Gastrocnemius medialis (tissue), 4 donors: ENCODE measurements at regions of chr2 and their contacts with region 1.

Region 1: GRCh38 chr2:190319555-190320498 is at the start of gene HIBCH:
- DNase-seq: peak; percentile 95 to 98
- ATAC-seq: peak; percentile 98
- H3K4me3 ChIP-seq: peak within 1 kb of the TSS; percentile 62 to 81 (median 70)
- H3K27ac ChIP-seq: peak within 1 kb of the TSS; percentile 83 to 91 (median 89)
- H3K4me1 ChIP-seq: peaks cover 14 to 19% of the 10 kb centered on the region in 2 donors
- H3K27me3 ChIP-seq: no peaks in the 10 kb centered on the region
- CTCF ChIP-seq: peak; percentile 40 to 78 (median 49)
- POLR2A ChIP-seq: peak; percentile 59 to 76
- total RNA-seq, gene HIBCH: 3.7 to 20.1 (median 10.6) TPM

Region 2: GRCh38 chr2:190180313-190181122 is 139.3 kb before region 1 on chr2:
- in situ Hi-C with region 1: no loop called
- intact Hi-C with region 1: loop called (anchors 5 kb)
- DNase-seq: peak; percentile 31 to 80
- ATAC-seq: peak; percentile 70 to 81
- H3K4me3 ChIP-seq: peak overlapping the region; percentile 57 to 80 (median 78)
- H3K27ac ChIP-seq: peak overlapping the region; percentile 82 to 94 (median 85)
- H3K4me1 ChIP-seq: peaks cover 0 to 4% of the 10 kb centered on the region in 2 donors
- H3K27me3 ChIP-seq: no peaks in the 10 kb centered on the region
- CTCF ChIP-seq: peak in 3 of 5 experiments; percentile 59 to 74 (median 68)
- POLR2A ChIP-seq: peak; percentile 43 to 44

Region 3: GRCh38 chr2:190261851-190262250 is 58.0 kb before region 1 on chr2:
- in situ Hi-C with region 1: no loop called
- intact Hi-C with region 1: loop called (anchors 2 kb)
- DNase-seq: no peak
- ATAC-seq: peak; percentile 52 to 71
- H3K4me3 ChIP-seq: no peak overlapping the region
- H3K27ac ChIP-seq: peak overlapping the region in 3 of 4 donors; percentile 4 to 51 (median 36)
- H3K4me1 ChIP-seq: peaks cover 10 to 16% of the 10 kb centered on the region in 2 donors
- H3K27me3 ChIP-seq: no peaks in the 10 kb centered on the region
- CTCF ChIP-seq: no peak
- POLR2A ChIP-seq: no peak

Region 4: GRCh38 chr2:190343500-190344275 is 23.9 kb after region 1 on chr2 and contains the start of gene INPP1:
- in situ Hi-C with region 1: no loop called
- intact Hi-C with region 1: loop called (anchors 2 kb)
- DNase-seq: peak; percentile 33 to 54
- ATAC-seq: peak; percentile 66 to 72
- H3K4me3 ChIP-seq: peak within 1 kb of the TSS; percentile 58 to 82 (median 72)
- H3K27ac ChIP-seq: peak within 1 kb of the TSS; percentile 77 to 90 (median 89)
- H3K4me1 ChIP-seq: peaks cover 13 to 24% of the 10 kb centered on the region in 2 donors
- H3K27me3 ChIP-seq: no peaks in the 10 kb centered on the region
- CTCF ChIP-seq: no peak
- POLR2A ChIP-seq: peak; percentile 65 to 74
- total RNA-seq, gene INPP1: 5.6 to 9.9 (median 8.0) TPM

Region 5: DNA sequence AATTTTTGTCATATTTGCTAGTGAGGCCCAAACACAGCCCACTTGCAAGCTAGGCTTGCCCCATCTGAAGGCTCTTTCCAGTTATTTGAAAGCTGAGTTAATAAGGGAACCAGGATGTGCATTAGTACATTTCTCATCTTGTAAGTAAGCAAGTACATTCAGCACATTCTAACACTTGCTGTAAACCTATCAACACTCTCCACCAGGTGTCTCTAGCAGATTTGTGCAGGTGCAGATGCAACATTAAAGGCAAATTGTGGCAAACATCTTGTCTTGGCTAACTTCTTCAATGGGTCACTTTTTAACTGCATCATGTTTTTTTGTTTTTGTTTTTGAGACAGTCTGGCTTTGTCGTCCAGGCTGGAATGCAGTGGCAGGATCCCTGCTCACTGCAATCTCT is 63.0 kb after region 1 on chr2:
- in situ Hi-C with region 1: loop called in 1 of 4 experiments (anchors 10 kb)
- intact Hi-C with region 1: no loop called
- DNase-seq: no peak
- ATAC-seq: no peak
- H3K4me3 ChIP-seq: no peak overlapping the region
- H3K27ac ChIP-seq: no peak overlapping the region
- H3K4me1 ChIP-seq: no peaks in the 10 kb centered on the region
- H3K27me3 ChIP-seq: no peaks in the 10 kb centered on the region
- CTCF ChIP-seq: peak in 3 of 5 experiments; percentile 12 to 45 (median 36)
- POLR2A ChIP-seq: no peak

Region 6: GRCh38 chr2:190534310-190535120 is 214.7 kb after region 1 on chr2 and contains the start of gene NEMP2:
- in situ Hi-C with region 1: loop called in 1 of 4 experiments (anchors 10 kb)
- intact Hi-C with region 1: no loop called
- DNase-seq: peak; percentile 55 to 74
- ATAC-seq: peak; percentile 91
- H3K4me3 ChIP-seq: peak within 1 kb of the TSS; percentile 59 to 81 (median 68)
- H3K27ac ChIP-seq: peak within 1 kb of the TSS; percentile 85 to 95 (median 87)
- H3K4me1 ChIP-seq: peaks cover 11 to 13% of the 10 kb centered on the region in 2 donors
- H3K27me3 ChIP-seq: no peaks in the 10 kb centered on the region
- CTCF ChIP-seq: no peak
- POLR2A ChIP-seq: peak; percentile 57 to 74
- total RNA-seq, gene NEMP2: 0.24 to 1.7 (median 1.3) TPM